Left cardiac atrium (tissue), 4 donors: ENCODE measurements at regions of chr7 and their contacts with region 1.

Region 1: DNA sequence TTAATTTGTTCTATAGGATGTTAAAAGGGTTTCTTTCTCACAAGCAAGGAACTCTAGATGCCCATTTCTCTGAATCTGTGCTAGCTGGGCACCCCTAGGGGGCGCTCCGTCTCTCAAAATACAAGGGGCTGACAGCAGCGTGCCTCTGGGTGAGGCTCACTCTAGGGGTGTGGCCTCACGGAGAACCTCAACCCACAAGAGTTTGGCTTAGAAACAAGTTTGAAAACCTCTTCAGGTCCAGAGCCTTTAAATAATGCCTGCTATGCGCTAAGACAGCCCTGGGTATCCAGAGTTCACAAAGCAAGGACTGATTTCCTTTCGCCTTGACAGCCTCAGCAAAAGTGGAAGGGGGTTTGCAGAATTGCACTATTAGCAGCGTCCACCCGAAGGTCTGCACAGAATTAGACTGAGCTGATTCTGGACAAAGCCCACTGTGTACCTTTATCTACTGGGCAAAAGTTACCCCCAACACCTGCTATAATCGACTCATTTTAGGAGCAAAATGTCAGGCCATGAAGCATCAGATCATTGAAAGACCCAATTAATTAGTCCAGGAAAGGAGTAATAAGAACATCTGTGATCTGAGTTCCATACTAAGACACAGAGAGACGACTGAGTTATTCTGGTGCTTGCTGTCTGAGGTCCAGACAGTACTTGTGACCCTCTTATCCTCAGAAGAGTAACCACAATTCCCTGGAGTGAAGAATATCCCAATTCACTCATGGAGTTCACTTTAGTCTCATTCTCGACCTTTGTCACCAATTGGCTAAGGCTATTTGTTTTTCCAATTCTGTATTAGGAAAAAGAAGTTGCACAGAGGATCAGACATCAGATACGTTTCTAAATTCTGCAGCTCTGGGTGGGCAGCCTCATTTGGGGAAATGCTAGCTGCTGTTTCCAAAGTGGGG is 574 bp upstream of the CPED1 start:
- DNase-seq: peak; percentile 93
- ATAC-seq: peak; percentile 92 to 93

Region 2: GRCh38 chr7:120805636-120806388 is 182.1 kb before region 1 on chr7:
- intact Hi-C with region 1: no loop called
- DNase-seq: peak; percentile 44
- ATAC-seq: peak; percentile 53 to 61

Region 3: GRCh38 chr7:121081327-121081936 is 93.5 kb after region 1 on chr7:
- intact Hi-C with region 1: loop called (anchors 1 to 5 kb)
- DNase-seq: no peak
- ATAC-seq: peak; percentile 59 to 69

Region 4: GRCh38 chr7:121107923-121108498 is 120.1 kb after region 1 on chr7:
- intact Hi-C with region 1: loop called in 1 of 2 experiments (anchors 2 kb)
- DNase-seq: no peak
- ATAC-seq: peak; percentile 78 to 83

Region 5: DNA sequence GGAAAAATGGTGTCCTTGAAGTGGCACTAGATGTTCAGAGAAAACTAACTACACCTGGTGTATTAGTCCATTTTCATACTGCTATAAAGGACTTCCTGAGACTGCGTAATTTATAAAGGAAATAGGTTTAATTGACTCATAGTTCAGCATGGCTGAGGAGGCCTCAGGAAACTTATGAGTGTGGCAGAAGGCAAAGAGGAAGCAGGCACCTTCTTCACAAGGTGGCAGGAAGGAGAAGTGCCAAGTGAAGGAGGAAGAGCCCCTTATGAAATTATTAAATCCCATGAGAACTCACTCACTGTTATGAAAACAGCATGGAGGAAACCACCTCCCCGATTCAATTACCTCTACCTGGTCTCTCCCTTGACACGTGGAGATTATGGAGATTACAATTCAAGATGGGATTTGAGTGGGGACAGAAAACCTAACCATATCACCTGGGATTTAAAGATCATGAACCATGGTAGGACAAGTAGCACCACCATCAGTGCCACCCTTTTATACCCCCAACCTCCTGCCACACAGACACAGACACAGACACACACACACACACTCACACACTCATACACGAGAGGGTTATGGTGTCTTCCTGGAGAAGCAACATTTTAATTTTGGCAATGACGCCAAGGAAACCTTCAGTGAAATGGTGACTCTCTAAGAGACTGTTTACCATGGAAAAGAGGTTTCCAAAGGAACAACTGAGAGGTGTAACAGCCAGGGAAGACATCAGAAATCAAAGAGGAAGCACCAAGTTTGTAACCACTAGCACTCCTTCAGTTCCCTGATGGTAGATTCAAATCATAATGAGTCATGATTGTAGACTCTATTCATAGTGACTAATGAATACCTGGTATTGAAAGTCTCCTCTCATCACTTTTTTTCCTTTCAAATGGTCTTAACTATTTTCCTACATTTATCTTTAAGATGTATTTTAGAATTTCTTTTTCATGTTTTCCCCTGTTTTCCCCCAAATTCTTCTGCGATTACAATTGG is 299.1 kb after region 1 on chr7:
- intact Hi-C with region 1: no loop called
- DNase-seq: no peak
- ATAC-seq: no peak